Posterior vena cava (tissue), 2 donors: ENCODE measurements at regions of chr6 and their contacts with region 1.

Region 1: DNA sequence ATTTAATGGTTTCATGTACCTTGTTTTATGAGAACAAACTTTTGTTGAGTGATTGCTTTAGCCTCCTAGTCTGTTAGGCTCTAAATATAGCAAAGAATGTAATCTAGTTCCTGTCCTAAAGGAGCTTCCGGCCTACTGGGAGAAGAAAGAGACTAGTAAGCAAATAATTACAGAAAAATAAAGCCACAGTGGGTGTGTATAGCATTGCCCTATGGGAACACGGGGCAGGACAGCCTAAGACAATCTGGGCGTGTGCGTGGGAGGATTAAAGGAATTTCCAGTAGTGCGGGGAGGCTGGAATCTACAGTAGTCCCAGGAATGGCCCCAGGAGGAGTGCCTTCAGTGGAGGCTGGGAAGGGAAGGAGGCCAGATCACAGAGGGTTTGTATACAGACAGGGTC is 98.1 kb upstream of the AKAP12 start:
- DNase-seq: no peak

Region 2: GRCh38 chr6:150606168-150606591 is 535.5 kb before region 1 on chr6:
- intact Hi-C with region 1: loop called in 1 of 2 experiments (anchors 5 kb)
- DNase-seq: no peak

Region 3: GRCh38 chr6:150683320-150683719 is 458.4 kb before region 1 on chr6:
- intact Hi-C with region 1: no loop called
- DNase-seq: no peak

Region 4: DNA sequence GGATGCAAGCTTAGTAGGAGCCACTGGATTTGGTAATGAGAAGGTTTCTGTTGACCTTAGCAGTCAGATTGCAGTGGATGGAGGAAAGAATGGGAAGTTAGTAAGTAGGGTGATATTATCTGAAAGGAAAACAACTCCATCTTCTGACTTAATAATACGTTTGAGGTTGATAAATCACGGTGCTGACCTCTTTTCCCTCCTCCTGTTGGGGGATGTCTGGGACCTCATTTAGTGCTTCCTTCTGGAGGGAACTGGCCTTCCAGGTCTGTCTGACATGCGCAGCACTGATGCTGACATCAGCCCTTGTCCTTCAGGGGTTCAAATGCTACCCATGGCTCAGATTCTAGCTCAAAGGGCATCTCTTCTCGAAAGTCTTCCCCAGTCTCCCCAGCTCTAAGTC is 49.8 kb after region 1 on chr6:
- intact Hi-C with region 1: loop called in 1 of 2 experiments (anchors 1 kb)
- DNase-seq: no peak